CD4-positive, alpha-beta T cell (primary cell): ENCODE measurements at regions of chr6 and their contacts with region 1.

Region 1: DNA sequence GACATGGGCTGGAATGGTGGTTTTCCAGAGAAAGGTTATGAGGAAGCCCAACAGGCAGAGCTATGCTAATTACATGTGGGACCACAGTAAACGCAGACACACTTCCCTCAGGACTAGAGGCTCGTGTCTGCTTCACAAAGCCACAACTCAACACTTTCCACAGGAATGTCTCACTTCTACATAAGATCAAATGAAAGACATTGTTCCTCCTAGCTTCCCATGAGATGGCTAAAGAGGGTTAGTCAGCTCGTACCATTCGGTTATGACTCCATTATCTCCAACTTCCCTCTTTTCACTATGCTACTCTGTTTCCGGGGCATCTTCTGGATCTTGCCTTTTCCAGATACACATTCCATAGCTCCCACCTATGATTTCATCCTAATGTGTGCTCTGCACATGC is 29.1 kb upstream of the ZC3H12D start:
- DNase-seq: peak in 1 of 14 experiments; percentile 27
- ATAC-seq: no peak
- H3K4me3 ChIP-seq: no peak overlapping the region
- H3K4me3 Mint-ChIP-seq: no peak overlapping the region
- H3K27ac ChIP-seq: no peak overlapping the region
- H3K27ac Mint-ChIP-seq: no peak overlapping the region
- H3K4me1 ChIP-seq: no peaks in the 10 kb centered on the region
- H3K4me1 Mint-ChIP-seq: peaks cover 37% of the 10 kb centered on the region
- H3K27me3 ChIP-seq: no peaks in the 10 kb centered on the region
- H3K27me3 Mint-ChIP-seq: no peaks in the 10 kb centered on the region
- CTCF ChIP-seq: no peak

Region 2: DNA sequence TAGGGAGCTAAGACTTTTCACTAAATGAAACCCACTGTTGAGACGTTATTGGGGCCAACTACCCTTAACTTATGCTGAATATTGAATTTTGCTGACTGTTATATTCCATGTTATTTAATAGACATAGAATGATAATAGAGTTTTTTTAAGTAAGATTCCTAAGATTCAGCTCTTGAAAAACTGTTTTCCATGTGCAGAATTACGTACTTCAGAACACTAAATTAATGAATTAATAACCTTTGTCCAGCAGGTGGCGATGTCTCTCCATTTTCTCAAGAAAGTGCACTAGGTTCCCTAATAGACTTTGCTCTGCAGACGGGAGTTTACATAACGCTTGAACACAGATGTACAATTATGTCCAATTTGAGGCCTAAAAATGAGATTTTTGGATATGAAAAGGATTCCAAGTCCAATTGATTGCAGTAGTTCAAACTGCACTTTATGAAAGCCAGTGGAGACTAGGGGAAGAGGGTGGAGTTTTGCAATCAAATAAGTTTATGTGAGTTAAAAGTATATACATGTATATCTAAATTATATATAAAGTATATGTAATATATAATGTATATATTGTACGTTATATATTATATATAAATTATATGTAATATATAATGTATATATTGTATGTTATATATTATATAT is 485.0 kb before region 1 on chr6:
- CTCF ChIA-PET with region 1: interaction called, 4 read pairs
- POLR2A ChIA-PET with region 1: no interaction called
- intact Hi-C with region 1: loop called (anchors 1 to 2 kb)
- DNase-seq: peak; percentile 23 to 91 (median 58)
- ATAC-seq: peak; percentile 73
- H3K4me3 ChIP-seq: no peak overlapping the region
- H3K4me3 Mint-ChIP-seq: no peak overlapping the region
- H3K27ac ChIP-seq: no peak overlapping the region
- H3K27ac Mint-ChIP-seq: peak overlapping the region; percentile 1
- H3K4me1 ChIP-seq: peaks cover 21% of the 10 kb centered on the region
- H3K4me1 Mint-ChIP-seq: peaks cover 45% of the 10 kb centered on the region
- H3K27me3 ChIP-seq: no peaks in the 10 kb centered on the region
- H3K27me3 Mint-ChIP-seq: no peaks in the 10 kb centered on the region
- CTCF ChIP-seq: peak; percentile 86

Region 3: DNA sequence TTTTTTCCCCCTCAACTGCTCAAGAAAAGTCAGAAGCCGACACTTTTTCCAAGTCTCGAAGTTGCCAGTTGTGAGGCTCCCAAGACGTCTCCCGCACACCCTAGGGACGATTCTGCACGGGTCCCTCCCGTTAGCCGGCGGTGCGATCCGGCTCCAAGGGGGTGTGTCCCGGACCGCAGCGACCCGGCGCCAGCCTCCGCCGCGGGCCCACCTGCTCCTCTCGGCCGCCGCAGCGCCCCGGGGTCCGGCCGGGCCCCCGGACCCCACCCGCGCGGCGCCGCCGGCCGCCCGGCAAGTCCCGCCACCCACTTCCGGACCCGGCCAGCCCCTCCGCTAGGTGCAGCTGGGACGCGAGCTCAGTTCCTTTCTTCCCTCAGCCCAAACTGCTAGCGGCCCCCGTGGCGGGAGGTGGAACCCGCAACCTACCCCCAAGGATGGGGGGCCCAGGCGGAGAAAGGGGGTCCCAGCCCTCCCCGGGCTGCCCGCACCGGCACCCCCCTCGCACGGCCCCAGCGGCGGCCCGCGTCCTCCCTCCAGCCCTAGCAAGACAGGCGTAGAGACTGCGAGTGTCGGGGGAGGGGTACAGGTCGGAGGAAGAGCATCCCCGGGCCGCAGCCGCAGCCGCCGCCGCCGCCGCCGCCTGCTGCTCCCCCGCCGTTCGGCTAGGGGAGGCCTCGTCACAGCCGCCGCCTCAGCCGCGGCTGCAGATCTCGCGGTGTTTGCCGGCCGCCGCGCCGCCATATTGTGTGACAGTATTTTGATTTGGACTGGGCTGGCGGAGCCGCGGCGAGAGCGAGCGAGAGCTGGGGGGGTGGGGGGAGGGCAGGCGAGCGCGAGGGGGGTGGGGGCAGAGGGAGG is 196.9 kb before region 1 on chr6:
- CTCF ChIA-PET with region 1: no interaction called
- POLR2A ChIA-PET with region 1: interaction called, 3 read pairs
- intact Hi-C with region 1: loop called in 1 of 2 experiments (anchors 10 kb)
- DNase-seq: peak; percentile 83 to 97 (median 88)
- ATAC-seq: peak; percentile 74
- H3K4me3 ChIP-seq: peak overlapping the region; percentile 73
- H3K4me3 Mint-ChIP-seq: peak overlapping the region; percentile 88
- H3K27ac ChIP-seq: peak overlapping the region; percentile 67 to 95
- H3K27ac Mint-ChIP-seq: peak overlapping the region; percentile 86
- H3K4me1 ChIP-seq: peaks cover 10% of the 10 kb centered on the region
- H3K4me1 Mint-ChIP-seq: peaks cover 49% of the 10 kb centered on the region
- H3K27me3 ChIP-seq: no peaks in the 10 kb centered on the region
- H3K27me3 Mint-ChIP-seq: no peaks in the 10 kb centered on the region
- CTCF ChIP-seq: no peak

Region 4: DNA sequence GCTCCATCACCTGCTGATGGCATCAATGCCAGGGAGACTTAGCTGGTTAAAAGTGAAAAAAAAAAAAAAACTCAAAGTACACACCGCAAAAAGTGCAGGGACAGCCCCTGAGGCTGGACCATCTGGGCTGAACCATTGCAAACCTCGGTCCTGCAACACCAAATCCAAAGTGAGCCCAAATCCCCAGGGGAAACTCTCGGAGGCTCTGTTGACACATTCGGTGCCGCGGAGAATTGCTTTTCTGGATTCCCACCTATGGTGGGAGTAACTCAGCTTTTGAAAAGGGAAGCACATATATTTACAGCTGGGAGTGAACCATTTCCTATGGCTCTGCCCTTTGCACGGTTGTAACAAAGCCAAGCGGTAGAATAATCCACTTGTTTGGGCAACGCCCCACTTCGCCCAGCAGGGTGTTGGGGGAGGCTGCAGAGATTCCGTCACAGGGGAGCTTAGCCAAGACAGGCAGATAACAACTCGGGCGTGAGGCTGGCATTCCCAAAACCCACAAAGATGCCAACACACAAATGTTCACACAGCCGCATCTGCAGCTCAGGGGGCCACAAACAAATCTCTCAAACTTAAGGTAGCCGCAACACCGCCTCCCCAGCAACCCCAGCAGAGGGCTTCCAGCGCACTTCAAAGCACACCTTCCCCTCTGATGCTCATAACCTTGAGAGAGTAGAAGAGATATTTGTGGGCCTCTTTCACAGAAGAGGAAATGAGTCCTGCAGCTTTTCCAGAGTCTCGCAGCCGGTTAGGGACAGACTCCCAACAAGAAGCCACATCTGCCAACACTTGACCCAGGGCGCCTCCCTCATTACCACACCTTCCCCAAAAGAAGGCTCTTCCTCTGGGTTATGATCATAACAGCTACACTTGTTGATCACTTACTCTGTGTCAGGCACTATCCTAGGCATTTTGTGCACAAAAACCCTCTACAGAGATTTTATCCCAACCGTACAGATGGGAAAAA is 40.5 kb before region 1 on chr6:
- CTCF ChIA-PET with region 1: interaction called, 9 read pairs
- POLR2A ChIA-PET with region 1: interaction called, 5 read pairs
- intact Hi-C with region 1: loop called (anchors 1 to 10 kb)
- DNase-seq: peak in 4 of 14 experiments; percentile 27 to 62 (median 42)
- ATAC-seq: peak; percentile 61
- H3K4me3 ChIP-seq: peak overlapping the region; percentile 4
- H3K4me3 Mint-ChIP-seq: peak overlapping the region; percentile 60
- H3K27ac ChIP-seq: peak overlapping the region; percentile 3 to 27
- H3K27ac Mint-ChIP-seq: peak overlapping the region; percentile 82
- H3K4me1 ChIP-seq: peaks cover 94% of the 10 kb centered on the region
- H3K4me1 Mint-ChIP-seq: peaks cover 53% of the 10 kb centered on the region
- H3K27me3 ChIP-seq: no peaks in the 10 kb centered on the region
- H3K27me3 Mint-ChIP-seq: no peaks in the 10 kb centered on the region
- CTCF ChIP-seq: peak; percentile 3

Region 5: GRCh38 chr6:149493761-149494320 is 20.1 kb before region 1 on chr6:
- CTCF ChIA-PET with region 1: interaction called, 22 read pairs
- POLR2A ChIA-PET with region 1: interaction called, 79 read pairs
- intact Hi-C with region 1: no loop called
- DNase-seq: no peak
- ATAC-seq: no peak
- H3K4me3 ChIP-seq: no peak overlapping the region
- H3K4me3 Mint-ChIP-seq: no peak overlapping the region
- H3K27ac ChIP-seq: peak overlapping the region; percentile 81 to 93
- H3K27ac Mint-ChIP-seq: peak overlapping the region; percentile 89
- H3K4me1 ChIP-seq: peaks cover 55% of the 10 kb centered on the region
- H3K4me1 Mint-ChIP-seq: peaks cover 60% of the 10 kb centered on the region
- H3K27me3 ChIP-seq: no peaks in the 10 kb centered on the region
- H3K27me3 Mint-ChIP-seq: no peaks in the 10 kb centered on the region
- CTCF ChIP-seq: no peak